Activated CD8-positive, alpha-beta T cell treated with anti-CD3 and anti-CD28 coated beads for 36 hours (primary cell): ENCODE measurements at regions of chr1 and their contacts with region 1.

Region 1: DNA sequence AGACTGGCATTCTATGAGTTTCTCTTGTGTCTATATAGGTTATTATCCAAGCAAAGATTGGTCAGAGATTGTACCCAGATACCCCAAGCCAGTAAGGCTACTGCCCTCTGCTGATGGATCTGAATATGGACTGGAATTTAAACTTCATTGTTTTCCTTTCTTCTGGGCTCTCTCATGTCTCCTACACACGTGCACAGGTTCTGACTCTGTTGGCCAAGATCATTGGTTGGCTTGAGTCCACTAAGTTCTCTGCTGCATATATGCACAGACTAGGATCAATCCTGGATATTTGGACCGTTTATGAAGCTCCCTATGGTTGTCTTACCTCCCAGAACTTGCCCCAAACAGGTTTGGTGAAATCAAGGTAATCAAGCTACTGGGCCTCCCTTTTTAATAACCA is 69.7 kb downstream of the CC2D1B start:
- DNase-seq: peak; percentile 2
- ATAC-seq: peak; percentile 72
- H3K4me3 Mint-ChIP-seq: no peak overlapping the region
- H3K27ac Mint-ChIP-seq: no peak overlapping the region
- H3K4me1 Mint-ChIP-seq: no peaks in the 10 kb centered on the region
- H3K27me3 Mint-ChIP-seq: no peaks in the 10 kb centered on the region
- CTCF ChIP-seq: peak; percentile 63

Region 2: GRCh38 chr1:52127181-52128180 is 168.9 kb before region 1 on chr1:
- CTCF ChIA-PET with region 1: interaction called, 18 read pairs
- POLR2A ChIA-PET with region 1: no interaction called
- intact Hi-C with region 1: loop called (anchors 5 kb)
- DNase-seq: peak; percentile 41
- ATAC-seq: peak; percentile 42
- H3K4me3 Mint-ChIP-seq: no peak overlapping the region
- H3K27ac Mint-ChIP-seq: no peak overlapping the region
- H3K4me1 Mint-ChIP-seq: peaks cover 5% of the 10 kb centered on the region
- H3K27me3 Mint-ChIP-seq: peaks cover 20% of the 10 kb centered on the region
- CTCF ChIP-seq: peak; percentile 74

Region 3: GRCh38 chr1:52520148-52520547 is 223.8 kb after region 1 on chr1:
- CTCF ChIA-PET with region 1: no interaction called
- POLR2A ChIA-PET with region 1: no interaction called
- intact Hi-C with region 1: no loop called
- DNase-seq: no peak
- ATAC-seq: peak; percentile 97
- H3K4me3 Mint-ChIP-seq: no peak overlapping the region
- H3K27ac Mint-ChIP-seq: peak overlapping the region; percentile 53
- H3K4me1 Mint-ChIP-seq: peaks cover 30% of the 10 kb centered on the region
- H3K27me3 Mint-ChIP-seq: no peaks in the 10 kb centered on the region
- CTCF ChIP-seq: no peak

Region 4: DNA sequence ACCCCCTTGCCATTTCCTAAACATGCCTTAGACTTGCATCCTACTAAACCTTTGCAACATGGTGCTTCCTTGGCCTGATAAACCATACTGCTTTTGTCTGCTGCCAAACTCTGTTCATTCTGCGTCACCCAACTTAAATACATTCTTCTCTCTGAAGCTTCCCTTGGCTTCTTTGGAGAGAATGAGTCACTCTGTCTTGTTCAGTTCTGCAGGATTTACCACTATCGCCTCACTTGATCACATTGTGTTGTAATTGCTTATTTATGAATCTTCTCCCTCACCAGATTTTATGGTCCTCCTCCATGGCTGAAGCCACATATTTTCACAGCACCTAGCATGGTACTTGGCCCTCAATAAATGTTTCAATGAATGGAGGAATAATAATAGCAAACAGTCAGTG is 278.2 kb after region 1 on chr1:
- CTCF ChIA-PET with region 1: no interaction called
- POLR2A ChIA-PET with region 1: no interaction called
- intact Hi-C with region 1: no loop called
- DNase-seq: no peak
- ATAC-seq: peak; percentile 49
- H3K4me3 Mint-ChIP-seq: no peak overlapping the region
- H3K27ac Mint-ChIP-seq: no peak overlapping the region
- H3K4me1 Mint-ChIP-seq: peaks cover 12% of the 10 kb centered on the region
- H3K27me3 Mint-ChIP-seq: no peaks in the 10 kb centered on the region
- CTCF ChIP-seq: no peak